MCF 10A (cell line): ENCODE measurements at regions of chr18 and their contacts with region 1.

Region 1: GRCh38 chr18:35580701-35581539 is 620 bp upstream of the GALNT1 start:
- DNase-seq: peak; percentile 55
- H3K4me3 Mint-ChIP-seq: peak overlapping the region; percentile 72
- H3K27ac Mint-ChIP-seq: no peak overlapping the region
- H3K4me1 Mint-ChIP-seq: peaks cover 23% of the 10 kb centered on the region
- H3K27me3 Mint-ChIP-seq: no peaks in the 10 kb centered on the region
- CTCF ChIP-seq: no peak

Region 2: GRCh38 chr18:35459005-35459441 is 121.9 kb before region 1 on chr18:
- CTCF ChIA-PET with region 1: no interaction called
- POLR2A ChIA-PET with region 1: interaction called, 17 read pairs
- intact Hi-C with region 1: no loop called
- DNase-seq: peak; percentile 74
- H3K4me3 Mint-ChIP-seq: no peak overlapping the region
- H3K27ac Mint-ChIP-seq: peak overlapping the region; percentile 72
- H3K4me1 Mint-ChIP-seq: peaks cover 73% of the 10 kb centered on the region
- H3K27me3 Mint-ChIP-seq: no peaks in the 10 kb centered on the region
- CTCF ChIP-seq: no peak

Region 3: GRCh38 chr18:35470435-35470834 is 110.5 kb before region 1 on chr18:
- CTCF ChIA-PET with region 1: no interaction called
- POLR2A ChIA-PET with region 1: no interaction called
- intact Hi-C with region 1: no loop called
- DNase-seq: no peak
- H3K4me3 Mint-ChIP-seq: no peak overlapping the region
- H3K27ac Mint-ChIP-seq: no peak overlapping the region
- H3K4me1 Mint-ChIP-seq: peaks cover 15% of the 10 kb centered on the region
- H3K27me3 Mint-ChIP-seq: no peaks in the 10 kb centered on the region
- CTCF ChIP-seq: no peak

Region 4: DNA sequence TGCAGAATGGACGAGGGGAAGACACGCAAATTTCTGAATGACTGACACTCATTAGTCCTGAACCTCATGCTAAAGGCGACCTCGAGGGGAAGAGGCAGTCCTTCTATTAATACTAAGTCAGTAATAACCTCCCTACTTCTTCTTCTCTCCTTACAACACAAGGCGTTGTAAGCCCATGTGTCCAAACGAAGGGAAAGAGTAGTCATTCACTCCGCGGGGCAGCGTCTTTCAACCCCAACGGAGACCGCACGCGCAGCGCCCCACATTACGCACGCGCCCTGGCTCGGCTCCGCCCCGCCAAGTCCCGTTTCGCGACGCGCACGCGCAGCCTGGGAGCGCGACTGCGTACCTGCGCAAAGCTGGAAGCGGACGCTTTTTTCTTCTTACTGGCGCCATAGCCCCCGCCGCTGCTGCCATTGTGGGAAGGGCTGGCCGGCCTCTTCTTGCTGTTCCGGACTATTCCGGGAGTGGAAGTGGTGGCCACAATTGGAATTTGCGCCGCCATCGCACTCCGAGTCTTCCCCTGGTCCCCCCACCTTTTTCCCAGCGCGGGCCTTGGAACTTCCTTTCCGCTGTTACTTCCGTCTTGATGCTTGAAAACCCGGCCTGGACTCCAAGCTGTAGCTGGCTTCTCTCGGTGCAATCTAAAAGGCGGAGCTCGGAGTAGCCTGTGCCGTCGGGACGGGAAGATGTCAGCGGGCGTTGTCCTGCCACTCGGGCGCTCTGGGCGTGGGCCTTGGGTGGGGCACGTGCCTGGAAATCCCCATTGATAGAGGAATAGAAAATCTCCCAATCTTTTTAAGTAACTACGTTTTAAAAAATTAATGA is 83.3 kb before region 1 on chr18 and contains the start of gene INO80C:
- CTCF ChIA-PET with region 1: interaction called, 5 read pairs
- POLR2A ChIA-PET with region 1: interaction called, 21 read pairs
- intact Hi-C with region 1: loop called (anchors 5 kb)
- DNase-seq: peak; percentile 95
- H3K4me3 Mint-ChIP-seq: peak within 1 kb of the TSS; percentile 87
- H3K27ac Mint-ChIP-seq: peak within 1 kb of the TSS; percentile 97
- H3K4me1 Mint-ChIP-seq: peaks cover 34% of the 10 kb centered on the region
- H3K27me3 Mint-ChIP-seq: no peaks in the 10 kb centered on the region
- CTCF ChIP-seq: no peak
- total RNA-seq, gene INO80C: 25.8 and 32.6 TPM in 2 replicates

Region 5: GRCh38 chr18:35611518-35611917 is 30.6 kb after region 1 on chr18:
- CTCF ChIA-PET with region 1: no interaction called
- POLR2A ChIA-PET with region 1: interaction called, 55 read pairs
- intact Hi-C with region 1: no loop called
- DNase-seq: no peak
- H3K4me3 Mint-ChIP-seq: no peak overlapping the region
- H3K27ac Mint-ChIP-seq: no peak overlapping the region
- H3K4me1 Mint-ChIP-seq: peaks cover 19% of the 10 kb centered on the region
- H3K27me3 Mint-ChIP-seq: no peaks in the 10 kb centered on the region
- CTCF ChIP-seq: no peak

Region 6: GRCh38 chr18:35939138-35939537 is 358.2 kb after region 1 on chr18:
- CTCF ChIA-PET with region 1: no interaction called
- POLR2A ChIA-PET with region 1: no interaction called
- intact Hi-C with region 1: loop called (anchors 10 kb)
- DNase-seq: no peak
- H3K4me3 Mint-ChIP-seq: no peak overlapping the region
- H3K27ac Mint-ChIP-seq: no peak overlapping the region
- H3K4me1 Mint-ChIP-seq: peaks cover 17% of the 10 kb centered on the region
- H3K27me3 Mint-ChIP-seq: no peaks in the 10 kb centered on the region
- CTCF ChIP-seq: no peak